ENCODE measurements at regions of chr3 and their contacts with region 1.

Region 1: GRCh38 chr3:139935016-139935865 is at the start of gene CLSTN2:
- DNase-seq: peak; percentile 91
- total RNA-seq, gene CLSTN2: 22.2 to 28.0 TPM

Region 2: GRCh38 chr3:139953131-139953910 is 18.1 kb after region 1 on chr3:
- intact Hi-C with region 1: no loop called
- DNase-seq: no peak

Region 3: GRCh38 chr3:140736863-140737460 is 801.7 kb after region 1 on chr3:
- intact Hi-C with region 1: loop called in 1 of 2 experiments (anchors 10 kb)
- DNase-seq: peak; percentile 87

Region 4: DNA sequence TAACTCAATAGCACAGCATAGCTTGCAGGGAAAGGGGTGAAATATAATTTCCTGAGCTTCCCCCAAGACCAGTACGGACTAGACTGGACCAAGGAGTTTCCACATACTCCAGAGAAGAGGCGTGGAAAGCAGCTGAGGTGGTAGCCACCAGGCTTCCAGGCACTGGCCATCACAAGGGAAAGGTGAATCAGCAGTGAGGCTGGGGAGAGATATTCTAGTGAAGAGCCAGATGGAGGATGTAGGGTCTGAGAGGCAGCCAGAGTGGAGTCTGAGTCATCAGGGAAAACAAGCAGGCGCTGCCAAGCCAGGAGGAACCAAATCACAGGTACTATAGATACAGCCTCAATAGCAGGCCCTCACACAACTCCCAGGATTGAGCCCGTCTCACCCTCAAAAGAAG is 1542.0 kb after region 1 on chr3:
- intact Hi-C with region 1: no loop called
- DNase-seq: no peak